Mammary epithelial cell (primary cell): ENCODE measurements at regions of chr10 and their contacts with region 1.

Region 1: GRCh38 chr10:34528320-34528719 is 286.8 kb downstream of the PARD3 start:
- DNase-seq: peak; percentile 91
- H3K4me3 ChIP-seq: peak overlapping the region in 1 of 3 experiments; percentile 9
- H3K27ac ChIP-seq: peak overlapping the region; percentile 90
- H3K4me1 ChIP-seq: peaks cover 41% of the 10 kb centered on the region
- H3K27me3 ChIP-seq: no peaks in the 10 kb centered on the region
- CTCF ChIP-seq: no peak

Region 2: GRCh38 chr10:33722067-33722466 is 806.3 kb before region 1 on chr10:
- CTCF ChIA-PET with region 1: no interaction called
- dilution Hi-C with region 1: no loop called
- in situ Hi-C with region 1: no loop called
- intact Hi-C with region 1: no loop called
- DNase-seq: no peak
- H3K4me3 ChIP-seq: no peak overlapping the region
- H3K27ac ChIP-seq: no peak overlapping the region
- H3K4me1 ChIP-seq: no peaks in the 10 kb centered on the region
- H3K27me3 ChIP-seq: no peaks in the 10 kb centered on the region
- CTCF ChIP-seq: no peak

Region 3: DNA sequence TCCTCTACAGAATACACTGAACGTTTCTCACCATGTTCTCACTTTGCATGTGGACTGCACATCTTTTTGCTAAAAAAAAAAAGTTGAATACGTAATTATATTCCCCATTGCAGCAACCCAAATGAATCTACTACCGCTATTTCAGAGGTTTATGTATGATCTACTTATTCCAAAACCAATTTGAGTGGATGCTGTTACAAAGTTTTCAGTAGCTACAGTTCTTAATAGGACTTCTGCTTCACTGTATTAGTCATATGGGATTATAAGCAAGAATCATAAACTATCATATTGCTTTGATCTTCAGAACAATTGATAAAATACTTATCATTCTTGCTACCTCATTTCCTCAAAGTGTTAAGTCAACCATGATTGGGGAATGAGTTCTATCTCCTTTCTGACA is 29.8 kb after region 1 on chr10:
- CTCF ChIA-PET with region 1: no interaction called
- dilution Hi-C with region 1: no loop called
- in situ Hi-C with region 1: no loop called
- intact Hi-C with region 1: no loop called
- DNase-seq: no peak
- H3K4me3 ChIP-seq: no peak overlapping the region
- H3K27ac ChIP-seq: no peak overlapping the region
- H3K4me1 ChIP-seq: peaks cover 15% of the 10 kb centered on the region
- H3K27me3 ChIP-seq: no peaks in the 10 kb centered on the region
- CTCF ChIP-seq: no peak

Region 4: DNA sequence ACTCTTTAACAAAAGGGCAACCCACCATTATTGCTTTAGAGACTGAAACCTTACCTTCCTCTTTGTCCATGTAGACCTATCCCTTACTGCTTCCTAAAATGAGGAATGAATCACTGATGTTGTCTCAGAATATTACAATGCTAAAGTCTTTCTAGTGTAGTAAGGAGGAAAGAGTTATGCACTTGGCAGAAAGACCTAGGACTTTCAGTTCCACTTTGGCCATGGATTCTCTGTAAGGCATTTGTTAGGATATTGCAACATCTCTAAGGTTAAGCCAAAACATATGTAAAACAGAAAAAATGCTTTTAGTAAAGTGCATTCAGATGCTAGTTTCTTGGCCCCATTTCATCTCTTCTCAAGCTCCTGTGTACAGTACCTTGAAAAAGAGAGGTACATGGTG is 55.8 kb after region 1 on chr10:
- CTCF ChIA-PET with region 1: no interaction called
- dilution Hi-C with region 1: no loop called
- in situ Hi-C with region 1: no loop called
- intact Hi-C with region 1: loop called (anchors 5 kb)
- DNase-seq: peak; percentile 53
- H3K4me3 ChIP-seq: no peak overlapping the region
- H3K27ac ChIP-seq: peak overlapping the region; percentile 84
- H3K4me1 ChIP-seq: peaks cover 49% of the 10 kb centered on the region
- H3K27me3 ChIP-seq: no peaks in the 10 kb centered on the region
- CTCF ChIP-seq: no peak